Heart left ventricle (tissue), 16 donors: ENCODE measurements at regions of chr5 and their contacts with region 1.

Region 1: GRCh38 chr5:174338185-174339010 is 292.9 kb downstream of the NSG2 start:
- DNase-seq: no peak
- ATAC-seq: peak in 3 of 4 donors; percentile 40 to 74 (median 73)
- H3K4me3 ChIP-seq: no peak overlapping the region
- H3K27ac ChIP-seq: no peak overlapping the region
- H3K4me1 ChIP-seq: peaks cover 0 to 15% (median 0%) of the 10 kb centered on the region in 12 donors
- H3K27me3 ChIP-seq: peaks cover 0 to 41% (median 4%) of the 10 kb centered on the region in 9 donors
- CTCF ChIP-seq: no peak
- POLR2A ChIP-seq: no peak

Region 2: DNA sequence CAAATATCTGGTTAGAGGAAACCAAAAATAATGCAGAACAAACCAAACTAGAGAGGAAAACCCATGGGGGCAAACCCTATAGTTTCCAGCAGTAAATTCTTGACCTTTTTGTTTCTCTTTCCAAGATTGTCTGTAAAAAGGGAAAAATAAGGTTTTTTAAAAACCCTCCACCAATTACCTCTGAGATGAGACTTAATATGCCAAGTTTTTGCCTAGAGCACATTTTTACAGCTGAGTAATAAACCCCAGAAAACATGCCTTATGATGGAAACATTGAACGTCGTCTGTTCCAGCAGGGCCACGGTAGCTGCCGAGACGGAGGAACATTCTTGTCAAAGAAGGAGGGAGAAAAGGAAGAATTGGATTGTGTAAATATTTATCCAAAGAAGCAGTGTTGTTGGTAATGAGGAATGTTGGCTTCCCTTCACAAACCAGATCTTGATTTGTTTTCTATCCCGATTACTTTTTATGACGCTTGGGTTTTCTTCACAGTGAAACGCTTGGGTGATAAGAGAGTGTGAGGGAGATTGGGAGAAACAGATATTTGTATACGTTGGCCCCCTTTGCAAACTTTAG is 368.7 kb after region 1 on chr5:
- intact Hi-C with region 1: no loop called
- DNase-seq: no peak
- ATAC-seq: no peak
- H3K4me3 ChIP-seq: no peak overlapping the region
- H3K27ac ChIP-seq: no peak overlapping the region
- H3K4me1 ChIP-seq: no peaks in the 10 kb centered on the region
- H3K27me3 ChIP-seq: peaks cover 0 to 63% (median 7%) of the 10 kb centered on the region in 9 donors
- CTCF ChIP-seq: no peak
- POLR2A ChIP-seq: no peak

Region 3: DNA sequence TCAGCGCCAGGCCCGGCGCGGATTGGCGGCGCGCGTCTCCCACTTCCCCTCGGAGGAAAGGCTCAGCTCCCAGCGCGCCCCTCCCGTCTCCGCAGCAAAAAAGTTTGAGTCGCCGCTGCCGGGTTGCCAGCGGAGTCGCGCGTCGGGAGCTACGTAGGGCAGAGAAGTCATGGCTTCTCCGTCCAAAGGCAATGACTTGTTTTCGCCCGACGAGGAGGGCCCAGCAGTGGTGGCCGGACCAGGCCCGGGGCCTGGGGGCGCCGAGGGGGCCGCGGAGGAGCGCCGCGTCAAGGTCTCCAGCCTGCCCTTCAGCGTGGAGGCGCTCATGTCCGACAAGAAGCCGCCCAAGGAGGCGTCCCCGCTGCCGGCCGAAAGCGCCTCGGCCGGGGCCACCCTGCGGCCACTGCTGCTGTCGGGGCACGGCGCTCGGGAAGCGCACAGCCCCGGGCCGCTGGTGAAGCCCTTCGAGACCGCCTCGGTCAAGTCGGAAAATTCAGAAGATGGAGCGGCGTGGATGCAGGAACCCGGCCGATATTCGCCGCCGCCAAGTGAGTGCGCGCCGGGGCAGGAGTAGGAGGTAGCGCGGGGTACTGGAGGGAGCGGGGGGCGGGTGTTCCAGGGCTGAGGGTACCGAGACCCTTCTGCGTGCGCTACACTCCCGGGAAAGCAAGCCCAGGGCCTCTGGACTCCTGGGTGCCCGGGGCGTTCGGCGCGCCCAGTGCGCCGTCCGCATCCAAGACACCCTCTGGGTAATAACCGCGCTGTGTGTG is 386.3 kb after region 1 on chr5 and contains the start of gene MSX2:
- intact Hi-C with region 1: no loop called
- DNase-seq: peak; percentile 88 to 92 (median 90)
- ATAC-seq: peak; percentile 98 to 99 (median 98)
- H3K4me3 ChIP-seq: peak within 1 kb of the TSS; percentile 43 to 90 (median 60)
- H3K27ac ChIP-seq: peak within 1 kb of the TSS in 11 of 12 donors; percentile 51 to 82 (median 70)
- H3K4me1 ChIP-seq: peaks cover 0 to 35% (median 6%) of the 10 kb centered on the region in 12 donors
- H3K27me3 ChIP-seq: peaks cover 32 to 97% (median 59%) of the 10 kb centered on the region in 9 donors
- CTCF ChIP-seq: no peak
- POLR2A ChIP-seq: peak; percentile 27 to 76
- total RNA-seq, gene MSX2: 1.4 to 5.3 (median 2.0) TPM

Region 4: GRCh38 chr5:174793684-174794328 is 455.4 kb after region 1 on chr5:
- intact Hi-C with region 1: loop called in 1 of 10 experiments (anchors 10 kb)
- DNase-seq: peak; percentile 37 to 76 (median 43)
- ATAC-seq: peak in 3 of 4 donors; percentile 57 to 88 (median 85)
- H3K4me3 ChIP-seq: no peak overlapping the region
- H3K27ac ChIP-seq: no peak overlapping the region
- H3K4me1 ChIP-seq: peaks cover 0 to 6% (median 0%) of the 10 kb centered on the region in 12 donors
- H3K27me3 ChIP-seq: peaks cover 0 to 51% (median 23%) of the 10 kb centered on the region in 9 donors
- CTCF ChIP-seq: peak; percentile 60 to 85 (median 76)
- POLR2A ChIP-seq: no peak